PC-3 (cell line): ENCODE measurements at regions of chr4 and their contacts with region 1.

Region 1: GRCh38 chr4:98467627-98468072 is 190.8 kb downstream of the TSPAN5 start:
- DNase-seq: peak; percentile 90
- ATAC-seq: peak; percentile 86
- H3K4me3 ChIP-seq: peak overlapping the region; percentile 64
- H3K27ac ChIP-seq: peak overlapping the region; percentile 73
- H3K4me1 ChIP-seq: peaks cover 14% of the 10 kb centered on the region
- H3K27me3 ChIP-seq: no peaks in the 10 kb centered on the region
- CTCF ChIP-seq: peak; percentile 82

Region 2: GRCh38 chr4:98113012-98113411 is 354.6 kb before region 1 on chr4:
- CTCF ChIA-PET with region 1: interaction called, 13 read pairs
- POLR2A ChIA-PET with region 1: no interaction called
- intact Hi-C with region 1: no loop called
- DNase-seq: peak; percentile 51
- ATAC-seq: peak; percentile 84
- H3K4me3 ChIP-seq: no peak overlapping the region
- H3K27ac ChIP-seq: no peak overlapping the region
- H3K4me1 ChIP-seq: no peaks in the 10 kb centered on the region
- H3K27me3 ChIP-seq: no peaks in the 10 kb centered on the region
- CTCF ChIP-seq: peak; percentile 67

Region 3: GRCh38 chr4:98150092-98150761 is 317.4 kb before region 1 on chr4:
- CTCF ChIA-PET with region 1: no interaction called
- POLR2A ChIA-PET with region 1: no interaction called
- intact Hi-C with region 1: loop called (anchors 10 kb)
- DNase-seq: peak; percentile 18
- ATAC-seq: no peak
- H3K4me3 ChIP-seq: no peak overlapping the region
- H3K27ac ChIP-seq: no peak overlapping the region
- H3K4me1 ChIP-seq: peaks cover 24% of the 10 kb centered on the region
- H3K27me3 ChIP-seq: no peaks in the 10 kb centered on the region
- CTCF ChIP-seq: peak; percentile 50

Region 4: DNA sequence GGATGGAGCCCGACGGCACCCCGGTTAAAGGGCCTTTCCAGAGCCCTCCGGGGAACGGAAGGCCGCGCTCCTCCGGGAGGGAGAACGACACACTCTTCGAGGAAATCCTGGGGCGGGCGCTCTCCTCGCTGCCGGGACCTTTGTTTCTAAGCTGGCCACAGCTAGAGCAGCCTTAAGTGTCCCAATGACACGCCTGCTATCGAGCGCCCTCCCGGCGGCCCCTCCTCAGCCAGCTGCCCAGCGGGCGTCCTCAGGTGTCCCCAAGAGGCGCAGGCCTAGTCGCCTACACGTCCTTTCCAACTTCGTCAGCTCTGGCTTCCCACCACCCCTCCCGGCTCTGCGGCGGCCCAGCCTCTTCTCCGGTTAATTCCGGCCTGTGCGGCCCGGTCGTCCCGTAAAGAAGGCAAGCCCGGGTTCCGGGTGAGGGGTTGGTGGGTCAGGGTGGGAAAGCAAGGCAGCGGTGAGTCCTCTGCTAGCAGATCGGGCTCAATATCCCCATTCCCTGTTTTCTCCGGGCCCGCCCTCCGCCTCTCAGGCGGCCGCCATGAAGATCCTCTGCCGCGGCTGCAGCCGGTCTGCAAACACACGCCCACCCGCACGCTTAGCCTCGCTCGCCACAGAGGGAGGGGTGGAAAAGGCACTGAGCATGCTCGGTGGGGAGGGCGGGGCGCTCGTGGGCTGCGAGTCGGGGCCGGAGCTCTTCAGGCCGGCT is 206.9 kb before region 1 on chr4:
- CTCF ChIA-PET with region 1: no interaction called
- POLR2A ChIA-PET with region 1: no interaction called
- intact Hi-C with region 1: loop called (anchors 5 kb)
- DNase-seq: peak; percentile 90
- ATAC-seq: peak; percentile 87
- H3K4me3 ChIP-seq: peak overlapping the region; percentile 93
- H3K27ac ChIP-seq: peak overlapping the region; percentile 85
- H3K4me1 ChIP-seq: peaks cover 22% of the 10 kb centered on the region
- H3K27me3 ChIP-seq: no peaks in the 10 kb centered on the region
- CTCF ChIP-seq: no peak

Region 5: GRCh38 chr4:98341309-98341708 is 126.3 kb before region 1 on chr4:
- CTCF ChIA-PET with region 1: no interaction called
- POLR2A ChIA-PET with region 1: no interaction called
- intact Hi-C with region 1: no loop called
- DNase-seq: no peak
- ATAC-seq: no peak
- H3K4me3 ChIP-seq: no peak overlapping the region
- H3K27ac ChIP-seq: no peak overlapping the region
- H3K4me1 ChIP-seq: no peaks in the 10 kb centered on the region
- H3K27me3 ChIP-seq: no peaks in the 10 kb centered on the region
- CTCF ChIP-seq: no peak

Region 6: GRCh38 chr4:98577956-98578355 is 110.3 kb after region 1 on chr4:
- CTCF ChIA-PET with region 1: no interaction called
- POLR2A ChIA-PET with region 1: no interaction called
- intact Hi-C with region 1: no loop called
- DNase-seq: no peak
- ATAC-seq: no peak
- H3K4me3 ChIP-seq: no peak overlapping the region
- H3K27ac ChIP-seq: no peak overlapping the region
- H3K4me1 ChIP-seq: peaks cover 38% of the 10 kb centered on the region
- H3K27me3 ChIP-seq: no peaks in the 10 kb centered on the region
- CTCF ChIP-seq: no peak

Region 7: DNA sequence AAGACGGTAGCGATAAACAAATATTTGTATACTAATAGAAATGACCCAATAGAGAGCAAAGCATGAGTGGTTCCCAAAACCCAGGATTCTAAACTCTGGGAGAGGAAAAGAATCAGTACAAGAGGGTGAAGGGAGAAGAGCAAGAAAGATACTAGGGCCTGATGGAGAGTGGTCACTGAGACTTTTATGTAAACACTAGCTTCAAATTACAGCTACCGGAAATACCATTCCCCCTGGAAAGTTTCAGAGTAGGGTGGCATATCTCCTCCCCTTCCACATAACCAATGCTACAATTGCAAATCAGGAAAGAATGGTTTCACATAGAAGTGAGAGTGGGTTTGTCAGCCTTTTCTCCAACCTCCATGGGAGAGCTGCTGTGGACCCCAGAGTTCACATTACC is 384.2 kb after region 1 on chr4:
- CTCF ChIA-PET with region 1: no interaction called
- POLR2A ChIA-PET with region 1: no interaction called
- intact Hi-C with region 1: loop called (anchors 10 kb)
- DNase-seq: no peak
- ATAC-seq: no peak
- H3K4me3 ChIP-seq: no peak overlapping the region
- H3K27ac ChIP-seq: no peak overlapping the region
- H3K4me1 ChIP-seq: no peaks in the 10 kb centered on the region
- H3K27me3 ChIP-seq: no peaks in the 10 kb centered on the region
- CTCF ChIP-seq: no peak